ENCODE measurements at regions of chr1 and their contacts with region 1.

Region 1: GRCh38 chr1:155938220-155938627 is 3.2 kb upstream of the RXFP4 start:
- DNase-seq: peak in 1 of 3 donors; percentile 75
- ATAC-seq: no peak
- H3K4me3 ChIP-seq: no peak overlapping the region
- H3K4me1 ChIP-seq: peaks cover 26% of the 10 kb centered on the region
- CTCF ChIP-seq: peak; percentile 15

Region 2: DNA sequence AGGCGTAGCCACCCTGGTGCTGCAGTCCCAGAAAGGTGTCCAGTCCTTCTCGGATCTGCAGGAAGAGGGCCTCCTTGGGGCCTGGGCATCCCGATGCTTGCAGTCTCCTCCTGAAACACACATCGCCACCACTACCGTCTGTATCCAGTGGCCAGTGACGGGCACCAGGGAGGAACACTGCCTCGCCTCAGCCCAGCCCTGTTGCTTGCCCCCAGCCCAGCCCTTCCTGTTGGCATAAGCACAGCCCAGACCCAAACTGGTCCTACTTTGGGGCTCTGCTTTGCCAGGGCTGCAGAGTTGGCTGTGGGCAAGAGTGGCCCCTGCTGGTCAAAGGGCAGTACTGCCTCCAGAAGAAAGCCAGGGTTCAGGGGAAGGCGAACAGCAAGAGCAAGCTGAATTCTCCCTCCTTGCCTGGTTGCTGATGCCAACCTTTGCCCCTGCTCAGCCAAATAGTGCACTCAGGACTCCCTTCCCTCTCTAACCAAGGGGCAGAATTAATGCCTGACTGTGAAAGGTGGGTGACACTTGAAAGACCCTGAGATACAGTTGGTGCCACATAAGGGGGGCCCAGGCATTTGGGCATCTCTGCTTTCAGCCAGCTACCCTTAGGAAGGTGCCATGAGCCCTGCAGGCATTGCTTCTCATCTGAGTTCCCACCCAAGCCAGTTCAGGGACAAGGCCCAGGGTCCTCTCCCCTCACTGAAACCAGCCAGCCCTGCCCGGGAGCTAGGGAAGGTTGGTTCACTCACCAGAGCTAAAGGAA is 51.2 kb after region 1 on chr1:
- intact Hi-C with region 1: loop called in 1 of 2 experiments (anchors 5 kb)
- DNase-seq: peak; percentile 76 to 87 (median 80)
- ATAC-seq: peak; percentile 98
- H3K4me3 ChIP-seq: no peak overlapping the region
- H3K4me1 ChIP-seq: no peaks in the 10 kb centered on the region
- CTCF ChIP-seq: peak; percentile 98

Region 3: GRCh38 chr1:156126043-156126700 is 187.9 kb after region 1 on chr1:
- intact Hi-C with region 1: no loop called
- DNase-seq: peak; percentile 64 to 91 (median 81)
- ATAC-seq: peak; percentile 36
- H3K4me3 ChIP-seq: no peak overlapping the region
- H3K4me1 ChIP-seq: peaks cover 90% of the 10 kb centered on the region
- CTCF ChIP-seq: no peak

Measured in mucosa of descending colon (tissue), 3 donors.